Activated CD4-positive, alpha-beta T cell treated with anti-CD3 and anti-CD28 coated beads, Interleukin-2, amount 10 ng/mL, durations not matched to agents 24 days and 14 days (primary cell): ENCODE measurements at regions of chr11 and their contacts with region 1.

Region 1: DNA sequence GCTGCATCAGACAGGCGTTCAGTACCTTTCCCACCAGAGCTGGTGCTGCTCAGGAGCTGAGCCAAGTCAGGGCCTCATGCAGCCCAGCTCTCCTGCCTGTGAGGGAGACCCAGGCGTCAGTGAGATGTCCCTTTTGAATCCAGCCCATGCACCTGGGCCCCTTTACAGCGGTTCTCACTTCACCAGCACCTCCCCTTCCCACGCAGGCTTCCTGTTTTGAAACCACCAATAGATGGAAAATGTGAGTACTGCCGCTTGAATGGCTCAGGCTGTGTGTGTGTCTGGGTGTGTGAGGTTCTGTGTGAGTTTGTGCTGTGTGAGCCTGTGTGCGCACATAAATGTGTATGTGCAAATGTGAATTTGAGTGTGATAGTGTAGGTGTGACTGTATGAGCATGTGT is 88.4 kb downstream of the UBASH3B start:
- DNase-seq: peak; percentile 93
- H3K4me3 Mint-ChIP-seq: no peak overlapping the region
- H3K27ac Mint-ChIP-seq: no peak overlapping the region
- H3K4me1 Mint-ChIP-seq: peaks cover 2% of the 10 kb centered on the region
- H3K27me3 Mint-ChIP-seq: peaks cover 12% of the 10 kb centered on the region

Region 2: GRCh38 chr11:122655527-122656072 is 88.3 kb before region 1 on chr11 and contains the start of gene UBASH3B:
- intact Hi-C with region 1: loop called (anchors 1 kb)
- DNase-seq: peak; percentile 89
- H3K4me3 Mint-ChIP-seq: peak within 1 kb of the TSS; percentile 97
- H3K27ac Mint-ChIP-seq: peak within 1 kb of the TSS; percentile 86
- H3K4me1 Mint-ChIP-seq: peaks cover 17% of the 10 kb centered on the region
- H3K27me3 Mint-ChIP-seq: peaks cover 50% of the 10 kb centered on the region
- total RNA-seq, gene UBASH3B: 10.9 and 14.8 TPM in 2 replicates

Region 3: DNA sequence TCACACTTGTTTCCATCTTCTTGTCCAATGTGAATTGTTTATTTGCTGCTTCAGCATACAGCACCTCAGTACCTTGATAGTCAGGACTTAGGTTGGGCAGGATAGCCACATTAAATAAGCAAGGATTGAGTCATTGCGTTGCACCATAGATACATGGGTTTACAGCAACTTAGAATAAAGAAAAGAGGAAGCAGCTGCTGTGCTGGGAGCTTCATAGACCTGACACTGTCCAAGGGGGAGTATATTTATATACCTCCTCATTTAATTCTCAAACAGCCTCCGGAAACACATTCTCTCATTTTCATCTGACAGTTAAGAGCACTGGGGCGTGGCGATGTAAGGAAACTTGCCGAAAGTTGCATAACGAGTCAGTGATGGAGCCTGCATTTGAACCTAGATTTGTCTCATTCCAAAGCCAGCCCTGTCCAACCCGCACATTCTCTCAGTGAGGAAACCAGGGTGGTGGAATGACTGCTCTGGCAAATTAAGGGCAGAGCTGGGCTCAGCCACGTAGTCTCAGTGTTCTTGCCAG is 46.2 kb before region 1 on chr11:
- intact Hi-C with region 1: loop called (anchors 1 kb)
- DNase-seq: peak; percentile 79
- H3K4me3 Mint-ChIP-seq: peak overlapping the region; percentile 63
- H3K27ac Mint-ChIP-seq: peak overlapping the region; percentile 82
- H3K4me1 Mint-ChIP-seq: peaks cover 43% of the 10 kb centered on the region
- H3K27me3 Mint-ChIP-seq: peaks cover 5% of the 10 kb centered on the region

Region 4: DNA sequence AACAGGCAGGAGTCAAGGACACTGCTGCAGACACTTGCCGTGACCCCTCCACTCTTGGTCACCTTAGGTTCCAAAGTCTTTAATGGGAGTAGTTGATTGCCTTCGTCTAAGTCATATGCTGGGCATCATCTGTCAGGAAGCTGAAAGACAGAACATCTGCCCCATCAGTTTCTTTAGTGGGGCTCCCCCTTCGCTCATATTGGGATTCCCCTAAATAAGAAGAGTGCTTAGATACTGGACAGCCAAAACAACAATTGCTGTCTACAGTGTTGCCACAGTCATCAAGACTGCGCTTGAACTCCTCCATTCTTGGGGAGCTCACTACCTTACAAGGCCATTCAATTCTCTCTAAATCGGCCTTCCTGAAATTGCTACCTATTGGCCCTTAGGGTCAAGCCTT is 29.9 kb before region 1 on chr11:
- intact Hi-C with region 1: no loop called
- DNase-seq: no peak
- H3K4me3 Mint-ChIP-seq: no peak overlapping the region
- H3K27ac Mint-ChIP-seq: no peak overlapping the region
- H3K4me1 Mint-ChIP-seq: peaks cover 20% of the 10 kb centered on the region
- H3K27me3 Mint-ChIP-seq: no peaks in the 10 kb centered on the region

Region 5: GRCh38 chr11:122727101-122727929 is 16.6 kb before region 1 on chr11:
- intact Hi-C with region 1: loop called (anchors 1 kb)
- DNase-seq: peak; percentile 83
- H3K4me3 Mint-ChIP-seq: peak overlapping the region; percentile 73
- H3K27ac Mint-ChIP-seq: peak overlapping the region; percentile 87
- H3K4me1 Mint-ChIP-seq: peaks cover 48% of the 10 kb centered on the region
- H3K27me3 Mint-ChIP-seq: no peaks in the 10 kb centered on the region

Region 6: DNA sequence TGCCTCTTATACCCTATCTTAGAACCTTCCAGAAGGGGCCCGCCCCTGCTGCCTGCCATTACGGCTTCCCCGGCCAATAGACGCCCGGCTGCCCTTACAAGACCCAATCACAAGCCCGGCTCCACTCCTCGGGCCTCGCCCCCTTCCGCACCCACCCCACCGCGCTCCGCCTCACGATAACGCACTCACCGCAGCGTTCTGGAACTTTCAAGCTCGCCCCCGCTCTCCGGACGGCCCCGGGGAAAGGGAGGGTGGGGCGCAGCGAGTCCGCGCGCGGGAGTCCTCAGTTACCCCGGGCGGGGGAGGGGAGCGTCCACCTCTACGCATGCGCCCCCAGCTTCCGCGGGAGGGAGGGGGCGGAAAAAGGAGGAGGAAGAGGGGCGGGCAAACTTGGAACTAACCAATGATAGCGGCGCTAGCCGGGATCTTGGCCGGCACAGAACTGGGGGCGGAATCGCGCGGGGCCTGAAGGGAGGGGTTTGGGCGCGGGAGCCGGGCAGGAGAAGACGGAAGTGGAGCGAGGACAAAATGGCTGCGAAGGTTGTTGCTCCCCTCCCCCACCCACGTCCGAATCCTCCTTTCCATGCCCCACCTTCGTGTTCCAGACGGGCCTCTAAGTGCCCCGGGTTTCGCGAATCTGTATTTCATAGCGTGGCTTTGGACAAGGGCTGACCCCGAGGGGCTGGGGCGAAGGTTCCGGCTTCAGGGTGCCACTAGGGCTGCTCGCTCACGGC is 318.4 kb after region 1 on chr11:
- intact Hi-C with region 1: loop called (anchors 2 kb)
- DNase-seq: peak; percentile 100
- H3K4me3 Mint-ChIP-seq: peak overlapping the region; percentile 100
- H3K27ac Mint-ChIP-seq: peak overlapping the region; percentile 99
- H3K4me1 Mint-ChIP-seq: peaks cover 46% of the 10 kb centered on the region
- H3K27me3 Mint-ChIP-seq: peaks cover 1% of the 10 kb centered on the region